MCF 10A (cell line): ENCODE measurements at regions of chr10 and their contacts with region 1.

Region 1: DNA sequence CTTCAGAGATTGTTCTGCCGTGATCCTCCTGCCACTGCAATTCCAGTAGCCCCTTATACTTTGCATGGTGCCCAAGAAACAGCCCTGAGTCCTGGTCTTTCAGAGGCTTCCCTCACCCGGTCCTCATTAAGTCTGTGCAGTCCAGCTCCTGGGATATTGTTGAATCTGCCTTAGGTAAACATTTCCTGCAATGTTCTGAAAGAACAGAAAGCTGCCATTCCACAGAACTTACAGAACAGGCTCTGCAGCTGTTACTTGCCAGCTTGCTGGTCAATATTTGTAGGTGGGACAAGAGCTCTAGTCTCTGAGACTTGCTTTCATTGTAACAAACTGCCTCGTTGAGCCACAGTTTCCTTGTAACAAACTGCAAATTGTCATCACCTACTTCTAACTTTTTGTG is 115.0 kb upstream of the KIF5B start:
- DNase-seq: no peak
- H3K4me3 Mint-ChIP-seq: no peak overlapping the region
- H3K27ac Mint-ChIP-seq: no peak overlapping the region
- H3K4me1 Mint-ChIP-seq: no peaks in the 10 kb centered on the region
- H3K27me3 Mint-ChIP-seq: no peaks in the 10 kb centered on the region
- CTCF ChIP-seq: no peak

Region 2: GRCh38 chr10:31982111-31982510 is 189.1 kb before region 1 on chr10:
- CTCF ChIA-PET with region 1: no interaction called
- POLR2A ChIA-PET with region 1: no interaction called
- intact Hi-C with region 1: no loop called
- DNase-seq: no peak
- H3K4me3 Mint-ChIP-seq: no peak overlapping the region
- H3K27ac Mint-ChIP-seq: no peak overlapping the region
- H3K4me1 Mint-ChIP-seq: peaks cover 3% of the 10 kb centered on the region
- H3K27me3 Mint-ChIP-seq: no peaks in the 10 kb centered on the region
- CTCF ChIP-seq: no peak

Region 3: GRCh38 chr10:32190890-32191491 is 19.8 kb after region 1 on chr10:
- CTCF ChIA-PET with region 1: interaction called, 11 read pairs
- POLR2A ChIA-PET with region 1: no interaction called
- intact Hi-C with region 1: no loop called
- DNase-seq: peak; percentile 56
- H3K4me3 Mint-ChIP-seq: no peak overlapping the region
- H3K27ac Mint-ChIP-seq: no peak overlapping the region
- H3K4me1 Mint-ChIP-seq: peaks cover 5% of the 10 kb centered on the region
- H3K27me3 Mint-ChIP-seq: no peaks in the 10 kb centered on the region
- CTCF ChIP-seq: peak; percentile 42